Pancreas (tissue), 10 donors: ENCODE measurements at regions of chrX and their contacts with region 1.

Region 1: DNA sequence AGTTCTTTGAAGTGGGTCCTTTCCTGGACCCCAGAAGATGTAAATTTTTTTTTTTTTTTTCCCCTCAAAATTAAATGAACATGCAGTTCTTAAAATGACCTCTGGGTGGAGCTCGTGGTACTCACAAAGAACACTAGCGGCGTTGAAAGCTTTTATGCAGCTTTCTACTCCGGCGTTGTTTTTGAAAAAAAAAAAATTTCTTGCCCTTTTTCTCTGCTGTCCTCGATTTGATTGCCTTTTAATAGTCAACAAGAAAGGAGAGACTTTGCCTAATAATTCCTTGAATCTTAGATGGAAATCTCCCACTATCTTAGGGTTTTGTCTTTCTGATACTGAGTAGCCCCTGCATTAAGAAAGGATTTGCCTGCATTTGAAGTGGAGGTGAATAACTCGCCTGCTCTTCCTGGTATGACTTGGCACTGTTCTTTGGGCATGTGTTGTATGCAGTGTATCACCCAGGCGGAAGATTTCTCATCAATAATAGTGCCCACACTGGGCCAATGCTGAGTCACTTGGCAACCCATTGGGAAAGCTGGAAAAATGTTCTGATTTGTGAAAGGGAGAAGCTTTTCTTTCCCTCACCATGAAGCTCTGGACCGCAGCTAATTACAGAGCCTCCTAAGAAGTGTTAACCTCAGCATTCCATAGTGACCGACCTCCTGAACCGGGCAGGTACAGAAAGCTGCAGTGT is 104.0 kb downstream of the PHEX start:
- DNase-seq: peak in 3 of 6 donors; percentile 31 to 55 (median 33)
- ATAC-seq: peak; percentile 86 to 90 (median 88)
- H3K4me3 ChIP-seq: no peak overlapping the region
- H3K27ac ChIP-seq: peak overlapping the region in 2 of 4 donors; percentile 22 to 39
- H3K4me1 ChIP-seq: peaks cover 0 to 3% (median 0%) of the 10 kb centered on the region in 3 donors
- H3K27me3 ChIP-seq: peaks cover 0 to 3% (median 0%) of the 10 kb centered on the region in 4 donors
- CTCF ChIP-seq: peak; percentile 51 to 73 (median 60)

Region 2: GRCh38 chrX:22012051-22012450 is 124.1 kb before region 1 on chrX:
- intact Hi-C with region 1: no loop called
- DNase-seq: no peak
- ATAC-seq: no peak
- H3K4me3 ChIP-seq: no peak overlapping the region
- H3K27ac ChIP-seq: no peak overlapping the region
- H3K4me1 ChIP-seq: no peaks in the 10 kb centered on the region
- H3K27me3 ChIP-seq: no peaks in the 10 kb centered on the region
- CTCF ChIP-seq: no peak

Region 3: GRCh38 chrX:22748093-22748999 is 612.2 kb after region 1 on chrX:
- intact Hi-C with region 1: loop called in 1 of 3 experiments (anchors 10 kb)
- DNase-seq: peak in 5 of 6 donors; percentile 19 to 71 (median 25)
- ATAC-seq: peak; percentile 64 to 87 (median 84)
- H3K4me3 ChIP-seq: no peak overlapping the region
- H3K27ac ChIP-seq: no peak overlapping the region
- H3K4me1 ChIP-seq: no peaks in the 10 kb centered on the region
- H3K27me3 ChIP-seq: peaks cover 0 to 5% (median 0%) of the 10 kb centered on the region in 4 donors
- CTCF ChIP-seq: peak; percentile 65 to 82 (median 71)